ENCODE measurements at regions of chr12 and their contacts with region 1.

Region 1: DNA sequence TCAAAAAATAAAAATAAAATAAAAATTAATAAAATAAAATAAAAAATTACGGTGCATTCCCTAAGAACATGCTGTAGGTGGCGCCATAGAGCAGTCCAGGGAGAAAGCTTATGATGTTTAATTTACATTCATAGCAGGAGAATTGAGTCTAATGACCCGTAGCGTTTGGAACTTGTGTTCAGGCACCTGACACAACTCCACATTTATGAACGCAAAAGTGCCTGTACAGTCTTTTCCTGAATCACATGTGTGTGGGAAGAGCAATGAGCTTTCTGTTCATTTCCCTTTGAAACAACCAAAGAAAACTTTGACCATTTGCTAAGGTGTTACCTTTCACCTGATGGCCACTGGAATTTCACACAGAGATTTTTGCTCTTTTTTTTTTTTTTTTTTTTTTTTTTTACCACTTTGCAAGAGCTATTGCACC is 60.6 kb upstream of the KCNA1 start:
- DNase-seq: peak; percentile 38
- H3K4me3 Mint-ChIP-seq: no peak overlapping the region
- H3K27ac Mint-ChIP-seq: no peak overlapping the region
- H3K4me1 Mint-ChIP-seq: no peaks in the 10 kb centered on the region
- H3K27me3 Mint-ChIP-seq: peaks cover 41% of the 10 kb centered on the region
- CTCF ChIP-seq: peak; percentile 70

Region 2: DNA sequence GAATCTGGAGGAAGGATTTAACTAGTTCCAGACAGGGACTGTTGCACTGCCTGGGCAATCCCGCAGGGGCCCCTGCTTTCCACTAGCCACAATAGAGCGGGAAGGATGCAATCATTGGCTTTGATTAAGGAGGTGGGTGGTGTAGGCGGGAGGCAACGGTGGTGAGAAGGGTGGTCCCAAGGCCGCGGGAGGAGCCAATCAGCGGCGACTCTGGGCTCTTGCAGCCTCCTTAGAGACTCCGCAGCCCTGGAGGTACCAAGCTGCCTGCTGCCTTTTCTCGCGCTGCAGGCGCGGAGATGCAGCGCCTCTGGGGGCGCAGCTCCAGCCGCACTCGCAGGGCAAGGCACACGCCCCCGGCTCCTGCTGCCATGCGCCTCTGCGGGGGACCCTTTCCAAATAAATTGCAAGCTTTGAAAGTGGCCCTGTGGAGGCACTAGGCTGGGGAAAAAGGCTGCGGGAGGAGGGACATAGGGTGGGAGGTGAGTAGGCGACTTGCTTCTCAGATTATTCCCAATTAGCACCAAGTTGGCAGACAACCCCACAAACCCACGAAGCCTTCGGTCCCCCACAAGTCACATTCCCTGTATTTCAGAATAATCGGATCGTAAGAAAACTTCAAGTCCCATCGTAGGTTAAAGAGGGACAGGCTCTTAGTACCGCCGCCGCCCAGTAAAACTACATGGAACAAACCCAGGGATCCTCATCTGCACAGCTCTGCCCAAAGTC is 59.7 kb after region 1 on chr12:
- CTCF ChIA-PET with region 1: no interaction called
- POLR2A ChIA-PET with region 1: no interaction called
- intact Hi-C with region 1: no loop called
- DNase-seq: no peak
- H3K4me3 Mint-ChIP-seq: no peak overlapping the region
- H3K27ac Mint-ChIP-seq: no peak overlapping the region
- H3K4me1 Mint-ChIP-seq: no peaks in the 10 kb centered on the region
- H3K27me3 Mint-ChIP-seq: no peaks in the 10 kb centered on the region
- CTCF ChIP-seq: no peak

Region 3: DNA sequence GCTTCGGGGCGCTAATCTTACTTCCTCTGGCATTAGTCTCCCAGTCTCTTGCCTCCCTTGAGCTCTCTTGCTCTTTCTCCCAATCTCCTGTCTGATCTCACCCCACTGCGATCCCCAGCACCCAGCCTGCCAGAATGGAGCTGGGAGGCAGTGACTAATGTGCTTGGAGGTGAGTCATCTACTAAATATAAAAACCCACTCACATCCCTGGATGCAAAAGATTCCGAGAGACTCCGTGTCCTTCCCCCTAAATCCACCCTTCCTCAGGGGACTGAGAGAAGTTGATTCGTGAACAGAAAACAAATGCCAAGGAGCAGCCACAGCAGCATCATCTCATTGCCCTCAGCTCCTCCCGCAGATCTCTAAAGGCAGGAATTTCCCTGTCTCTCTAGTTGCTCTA is 148.8 kb after region 1 on chr12:
- CTCF ChIA-PET with region 1: interaction called, 90 read pairs
- POLR2A ChIA-PET with region 1: no interaction called
- intact Hi-C with region 1: no loop called
- DNase-seq: peak; percentile 60
- H3K4me3 Mint-ChIP-seq: no peak overlapping the region
- H3K27ac Mint-ChIP-seq: no peak overlapping the region
- H3K4me1 Mint-ChIP-seq: peaks cover 7% of the 10 kb centered on the region
- H3K27me3 Mint-ChIP-seq: peaks cover 14% of the 10 kb centered on the region
- CTCF ChIP-seq: no peak